HepG2 (cell line): ENCODE measurements at regions of chr12 and their contacts with region 1.

Region 1: GRCh38 chr12:19129486-19130223 is at the start of gene PLEKHA5:
- DNase-seq: peak; percentile 44
- ATAC-seq: peak; percentile 87
- H3K4me3 ChIP-seq: peak within 1 kb of the TSS; percentile 82 to 85 (median 83)
- H3K27ac ChIP-seq: peak within 1 kb of the TSS; percentile 66
- H3K4me1 ChIP-seq: peaks cover 27% of the 10 kb centered on the region
- H3K27me3 ChIP-seq: no peaks in the 10 kb centered on the region
- CTCF ChIP-seq: peak; percentile 70
- EP300 ChIP-seq: no peak
- POLR2A ChIP-seq: peak in 1 of 2 experiments; percentile 62; a peak in 1 of 4 replicates
- RAD21 ChIP-seq: peak; percentile 44; the same call in 1 of the 2 replicates
- total RNA-seq, gene PLEKHA5: 15.4 and 18.3 TPM in 2 replicates

Region 2: GRCh38 chr12:18861287-18861858 is 268.3 kb before region 1 on chr12:
- CTCF ChIA-PET with region 1: no interaction called
- POLR2A ChIA-PET with region 1: no interaction called
- in situ Hi-C with region 1: no loop called
- intact Hi-C with region 1: loop called (anchors 2 kb)
- DNase-seq: peak; percentile 29
- ATAC-seq: no peak
- H3K4me3 ChIP-seq: no peak overlapping the region
- H3K27ac ChIP-seq: no peak overlapping the region
- H3K4me1 ChIP-seq: no peaks in the 10 kb centered on the region
- H3K27me3 ChIP-seq: no peaks in the 10 kb centered on the region
- CTCF ChIP-seq: peak; percentile 49
- EP300 ChIP-seq: no peak
- POLR2A ChIP-seq: no peak
- RAD21 ChIP-seq: no peak

Region 3: GRCh38 chr12:18998343-18999261 is 131.1 kb before region 1 on chr12:
- CTCF ChIA-PET with region 1: no interaction called
- POLR2A ChIA-PET with region 1: no interaction called
- in situ Hi-C with region 1: no loop called
- intact Hi-C with region 1: no loop called
- DNase-seq: no peak
- ATAC-seq: no peak
- H3K4me3 ChIP-seq: no peak overlapping the region
- H3K27ac ChIP-seq: no peak overlapping the region
- H3K4me1 ChIP-seq: no peaks in the 10 kb centered on the region
- H3K27me3 ChIP-seq: no peaks in the 10 kb centered on the region; a peak in 1 of 5 replicates
- CTCF ChIP-seq: no peak
- EP300 ChIP-seq: no peak
- POLR2A ChIP-seq: no peak
- RAD21 ChIP-seq: no peak

Region 4: DNA sequence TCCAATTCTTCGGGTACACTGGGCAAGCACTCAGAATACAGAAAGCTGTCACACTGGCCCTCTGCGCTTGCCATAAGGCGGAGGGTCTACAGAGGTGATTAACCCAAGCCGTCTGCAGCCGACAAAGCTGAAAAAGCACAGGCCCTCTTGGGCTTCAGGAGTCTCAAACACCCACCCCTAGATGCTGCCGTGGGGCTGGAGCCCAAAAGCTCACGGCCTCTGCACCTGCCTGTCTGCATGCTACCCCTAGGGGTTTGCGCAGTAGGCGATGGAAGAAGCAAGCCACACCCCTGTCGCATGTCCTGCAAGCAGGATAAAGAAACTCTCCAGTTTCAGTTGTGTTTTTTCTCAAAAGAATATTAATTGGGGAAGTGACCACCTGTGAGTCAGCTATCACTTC is 118.9 kb before region 1 on chr12:
- CTCF ChIA-PET with region 1: no interaction called
- POLR2A ChIA-PET with region 1: no interaction called
- in situ Hi-C with region 1: no loop called
- intact Hi-C with region 1: no loop called
- DNase-seq: no peak
- ATAC-seq: no peak
- H3K4me3 ChIP-seq: no peak overlapping the region
- H3K27ac ChIP-seq: no peak overlapping the region
- H3K4me1 ChIP-seq: no peaks in the 10 kb centered on the region
- H3K27me3 ChIP-seq: no peaks in the 10 kb centered on the region
- CTCF ChIP-seq: no peak
- EP300 ChIP-seq: no peak
- POLR2A ChIP-seq: no peak
- RAD21 ChIP-seq: no peak

Region 5: DNA sequence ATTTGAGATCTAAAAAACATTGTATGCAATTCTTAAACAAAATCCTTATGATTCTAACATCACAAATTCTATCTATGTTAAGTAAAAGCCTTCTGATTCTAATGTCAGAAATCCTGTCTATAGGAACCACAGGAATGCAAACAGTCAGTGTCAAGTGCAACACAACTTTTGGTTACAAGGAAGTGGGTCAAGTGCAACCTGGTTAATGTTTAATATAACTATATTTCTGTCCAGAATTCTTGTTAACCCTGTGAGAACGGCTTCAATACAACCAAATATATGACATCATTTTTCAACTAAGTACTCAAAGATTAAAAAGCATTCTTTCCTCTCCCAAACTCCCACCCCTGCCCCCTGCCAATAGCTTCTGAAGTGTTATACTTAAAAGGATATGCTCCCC is 108.0 kb before region 1 on chr12:
- CTCF ChIA-PET with region 1: no interaction called
- POLR2A ChIA-PET with region 1: no interaction called
- in situ Hi-C with region 1: no loop called
- intact Hi-C with region 1: loop called (anchors 2 kb)
- DNase-seq: peak; percentile 31
- ATAC-seq: peak; percentile 56
- H3K4me3 ChIP-seq: no peak overlapping the region
- H3K27ac ChIP-seq: no peak overlapping the region
- H3K4me1 ChIP-seq: 0 out of 2 replicates have a peak, but pooled peaks cover 7% of the 10 kb centered on the region
- H3K27me3 ChIP-seq: no peaks in the 10 kb centered on the region
- CTCF ChIP-seq: no peak
- EP300 ChIP-seq: no peak
- POLR2A ChIP-seq: no peak
- RAD21 ChIP-seq: no peak

Region 6: GRCh38 chr12:19144985-19145384 is 15.3 kb after region 1 on chr12:
- CTCF ChIA-PET with region 1: no interaction called
- POLR2A ChIA-PET with region 1: no interaction called
- in situ Hi-C with region 1: no loop called
- intact Hi-C with region 1: loop called (anchors 2 kb)
- DNase-seq: peak; percentile 58
- ATAC-seq: peak; percentile 71
- H3K4me3 ChIP-seq: no peak overlapping the region
- H3K27ac ChIP-seq: no peak overlapping the region
- H3K4me1 ChIP-seq: peaks cover 14% of the 10 kb centered on the region
- H3K27me3 ChIP-seq: no peaks in the 10 kb centered on the region
- CTCF ChIP-seq: no peak
- EP300 ChIP-seq: no peak
- POLR2A ChIP-seq: no peak
- RAD21 ChIP-seq: no peak

Region 7: GRCh38 chr12:19186722-19187661 is 57.3 kb after region 1 on chr12:
- CTCF ChIA-PET with region 1: no interaction called
- POLR2A ChIA-PET with region 1: no interaction called
- in situ Hi-C with region 1: no loop called
- intact Hi-C with region 1: loop called (anchors 2 kb)
- DNase-seq: peak; percentile 45
- ATAC-seq: peak; percentile 65
- H3K4me3 ChIP-seq: no peak overlapping the region
- H3K27ac ChIP-seq: no peak overlapping the region
- H3K4me1 ChIP-seq: peaks cover 14% of the 10 kb centered on the region
- H3K27me3 ChIP-seq: no peaks in the 10 kb centered on the region
- CTCF ChIP-seq: peak; percentile 67
- EP300 ChIP-seq: no peak
- POLR2A ChIP-seq: no peak
- RAD21 ChIP-seq: 0 out of 2 replicates have a peak, but pooled peaks have one; percentile 26

Region 8: GRCh38 chr12:19223018-19223417 is 93.4 kb after region 1 on chr12:
- CTCF ChIA-PET with region 1: no interaction called
- POLR2A ChIA-PET with region 1: no interaction called
- in situ Hi-C with region 1: no loop called
- intact Hi-C with region 1: no loop called
- DNase-seq: no peak
- ATAC-seq: no peak
- H3K4me3 ChIP-seq: no peak overlapping the region
- H3K27ac ChIP-seq: no peak overlapping the region
- H3K4me1 ChIP-seq: peaks cover 18% of the 10 kb centered on the region
- H3K27me3 ChIP-seq: no peaks in the 10 kb centered on the region
- CTCF ChIP-seq: no peak
- EP300 ChIP-seq: no peak
- POLR2A ChIP-seq: no peak
- RAD21 ChIP-seq: no peak

Region 9: DNA sequence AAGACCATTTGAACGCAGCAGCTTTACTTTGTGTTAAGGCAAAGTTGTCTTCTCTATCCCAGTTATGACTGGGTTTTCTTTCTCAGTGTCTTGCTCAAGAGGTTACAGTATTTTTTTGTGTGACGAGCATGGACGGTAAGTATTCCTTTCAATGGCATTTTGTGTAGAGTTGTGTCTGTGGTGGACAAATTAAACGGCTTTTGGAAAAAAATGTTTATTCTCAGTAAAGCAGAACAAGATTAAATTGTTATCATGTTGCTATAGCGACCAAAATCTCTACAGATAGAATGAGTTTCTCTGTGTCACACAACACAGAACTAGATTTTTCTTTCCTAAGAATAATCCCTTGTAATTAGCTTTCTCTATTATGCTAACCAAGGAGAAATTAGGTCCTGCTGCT is 726.7 kb after region 1 on chr12:
- CTCF ChIA-PET with region 1: no interaction called
- POLR2A ChIA-PET with region 1: no interaction called
- in situ Hi-C with region 1: no loop called
- intact Hi-C with region 1: no loop called
- DNase-seq: no peak
- ATAC-seq: no peak
- H3K4me3 ChIP-seq: no peak overlapping the region
- H3K27ac ChIP-seq: no peak overlapping the region
- H3K4me1 ChIP-seq: no peaks in the 10 kb centered on the region
- H3K27me3 ChIP-seq: no peaks in the 10 kb centered on the region
- CTCF ChIP-seq: no peak
- EP300 ChIP-seq: no peak
- POLR2A ChIP-seq: no peak
- RAD21 ChIP-seq: no peak